ENCODE measurements at regions of chr9 and their contacts with region 1.

Region 1: DNA sequence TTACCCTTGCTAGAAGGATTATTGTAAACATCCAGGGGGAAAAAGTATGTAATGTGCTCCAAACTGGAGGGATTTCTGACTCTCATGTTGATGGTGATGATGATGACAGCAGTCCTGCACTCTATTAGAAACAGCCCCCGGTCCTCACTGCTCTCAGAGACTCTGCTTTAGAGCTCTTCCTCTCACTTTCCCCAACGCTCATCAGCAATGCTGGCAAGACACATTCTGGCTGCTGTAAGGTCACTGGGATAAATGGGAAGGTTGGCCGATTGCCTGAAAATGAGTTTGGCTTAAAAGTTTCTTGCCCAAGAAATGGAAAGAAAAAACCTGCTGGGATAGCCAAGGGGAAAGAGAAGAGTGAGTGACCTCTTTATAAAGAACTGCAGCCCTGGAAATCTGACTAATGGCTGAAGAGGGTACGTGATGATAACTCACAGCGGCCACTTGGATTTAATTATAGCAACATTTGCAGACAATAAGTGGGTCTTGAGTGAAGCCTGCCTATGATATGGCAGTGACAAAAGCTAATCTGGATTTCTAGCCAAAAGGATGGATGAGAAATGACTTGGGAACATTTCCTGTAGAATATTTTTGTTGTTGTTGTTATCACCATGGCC is 235.8 kb downstream of the TMEM38B start:
- DNase-seq: peak in 4 of 5 donors; percentile 16 to 67 (median 36)
- ATAC-seq: peak; percentile 62 to 96 (median 90)
- H3K4me3 ChIP-seq: no peak overlapping the region
- H3K27ac ChIP-seq: peak overlapping the region in 9 of 12 donors; percentile 38 to 71 (median 49)
- H3K4me1 ChIP-seq: peaks cover 0 to 12% (median 0%) of the 10 kb centered on the region in 12 donors
- H3K27me3 ChIP-seq: no peaks in the 10 kb centered on the region
- CTCF ChIP-seq: no peak
- POLR2A ChIP-seq: no peak

Region 2: DNA sequence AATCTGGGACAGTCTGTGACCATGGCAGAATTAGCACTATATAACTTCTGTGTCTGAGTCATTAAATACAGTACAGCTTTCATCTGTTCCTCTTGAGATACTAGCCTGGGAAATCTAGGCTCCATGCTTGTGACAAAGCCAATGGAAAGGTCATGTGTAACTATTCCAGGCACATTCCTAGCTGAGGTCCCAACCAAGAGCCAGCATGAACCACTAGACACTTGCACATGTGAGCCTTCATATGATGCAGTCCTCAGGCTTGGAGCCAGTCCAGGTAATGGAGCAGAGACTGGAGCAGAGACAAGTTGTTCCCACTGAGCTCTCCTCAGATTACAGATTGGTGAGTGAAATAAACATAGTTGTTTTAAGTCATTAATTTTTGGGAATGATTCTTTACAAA is 520.4 kb after region 1 on chr9:
- intact Hi-C with region 1: loop called in 1 of 10 experiments (anchors 10 kb)
- DNase-seq: peak in 4 of 5 donors; percentile 65 to 87 (median 70)
- ATAC-seq: peak; percentile 96 to 97 (median 96)
- H3K4me3 ChIP-seq: peak overlapping the region in 3 of 12 donors; percentile 8 to 40 (median 19)
- H3K27ac ChIP-seq: peak overlapping the region; percentile 23 to 81 (median 62)
- H3K4me1 ChIP-seq: peaks cover 0 to 14% (median 0%) of the 10 kb centered on the region in 12 donors
- H3K27me3 ChIP-seq: no peaks in the 10 kb centered on the region
- CTCF ChIP-seq: no peak
- POLR2A ChIP-seq: no peak